Psoas muscle (tissue), 8 donors: ENCODE measurements at regions of chr16 and their contacts with region 1.

Region 1: DNA sequence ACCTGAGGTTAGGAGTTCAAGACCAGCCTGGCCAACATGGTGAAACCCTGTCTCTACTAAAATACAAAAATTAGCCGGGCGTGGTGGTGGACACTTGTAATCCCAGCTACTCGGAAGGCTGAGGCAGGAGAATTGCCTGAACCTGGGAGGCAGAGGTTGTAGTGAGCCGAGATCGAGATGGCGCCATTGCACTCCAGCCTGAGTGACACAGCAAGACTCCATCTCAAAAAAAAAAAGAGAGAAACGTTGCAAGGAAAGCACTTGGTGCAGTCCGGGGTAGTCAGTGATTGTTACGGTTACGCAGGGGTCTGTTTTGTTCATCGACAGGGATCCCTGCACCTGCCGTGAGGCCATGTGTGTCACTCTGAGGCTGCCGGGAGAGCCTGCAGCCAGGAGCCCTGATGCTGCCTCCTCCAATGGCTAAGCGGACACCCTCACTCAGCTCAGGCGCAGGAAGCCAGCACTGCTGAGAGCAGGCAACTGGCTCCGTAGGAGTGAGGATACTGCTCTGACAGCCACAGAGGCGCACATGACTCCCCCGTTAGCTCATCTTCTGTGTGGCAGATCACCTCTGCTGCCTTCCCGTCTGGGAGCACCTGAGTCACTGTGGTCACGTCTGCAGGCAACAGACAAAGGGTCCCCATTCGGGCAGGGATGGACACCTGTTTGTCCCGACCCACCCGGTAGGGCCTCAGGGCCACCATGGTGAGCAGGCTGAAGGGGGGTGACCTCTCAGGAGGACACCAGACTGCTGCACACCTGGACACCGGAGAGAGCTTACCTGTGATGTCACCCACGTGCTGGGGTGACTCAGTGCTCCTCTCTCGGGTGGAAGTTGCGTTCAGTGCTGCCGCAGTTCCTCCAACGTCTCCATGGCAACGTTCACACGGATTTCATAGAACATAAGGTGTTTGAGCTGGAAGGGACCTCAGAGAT is 5.2 kb upstream of the RAB26 start:
- DNase-seq: no peak
- ATAC-seq: no peak
- H3K4me3 ChIP-seq: no peak overlapping the region
- H3K27ac ChIP-seq: no peak overlapping the region
- H3K4me1 ChIP-seq: peaks cover 17% of the 10 kb centered on the region
- H3K27me3 ChIP-seq: no peaks in the 10 kb centered on the region
- CTCF ChIP-seq: no peak

Region 2: GRCh38 chr16:1971796-1972489 is 171.3 kb before region 1 on chr16 and contains the start of gene TBL3:
- intact Hi-C with region 1: no loop called
- DNase-seq: peak; percentile 94 to 97
- ATAC-seq: peak; percentile 94 to 97 (median 94)
- H3K4me3 ChIP-seq: peak within 1 kb of the TSS; percentile 100
- H3K27ac ChIP-seq: peak within 1 kb of the TSS; percentile 98
- H3K4me1 ChIP-seq: peaks cover 20% of the 10 kb centered on the region
- H3K27me3 ChIP-seq: no peaks in the 10 kb centered on the region
- CTCF ChIP-seq: no peak
- total RNA-seq, gene TBL3: 31.5 to 41.8 (median 40.7) TPM

Region 3: GRCh38 chr16:2090777-2091546 is 52.2 kb before region 1 on chr16:
- intact Hi-C with region 1: no loop called
- DNase-seq: peak; percentile 78 to 88
- ATAC-seq: peak; percentile 66 to 82 (median 77)
- H3K4me3 ChIP-seq: peak overlapping the region; percentile 38
- H3K27ac ChIP-seq: peak overlapping the region; percentile 87
- H3K4me1 ChIP-seq: peaks cover 14% of the 10 kb centered on the region
- H3K27me3 ChIP-seq: no peaks in the 10 kb centered on the region
- CTCF ChIP-seq: peak; percentile 22

Region 4: GRCh38 chr16:2121853-2122252 is 21.4 kb before region 1 on chr16:
- intact Hi-C with region 1: loop called in 1 of 2 experiments (anchors 2 kb)
- DNase-seq: peak; percentile 59 to 86
- ATAC-seq: peak; percentile 49 to 64 (median 60)
- H3K4me3 ChIP-seq: peak overlapping the region; percentile 46
- H3K27ac ChIP-seq: peak overlapping the region; percentile 99
- H3K4me1 ChIP-seq: peaks cover 52% of the 10 kb centered on the region
- H3K27me3 ChIP-seq: no peaks in the 10 kb centered on the region
- CTCF ChIP-seq: no peak